ENCODE measurements at regions of chr13 and their contacts with region 1.

Region 1: DNA sequence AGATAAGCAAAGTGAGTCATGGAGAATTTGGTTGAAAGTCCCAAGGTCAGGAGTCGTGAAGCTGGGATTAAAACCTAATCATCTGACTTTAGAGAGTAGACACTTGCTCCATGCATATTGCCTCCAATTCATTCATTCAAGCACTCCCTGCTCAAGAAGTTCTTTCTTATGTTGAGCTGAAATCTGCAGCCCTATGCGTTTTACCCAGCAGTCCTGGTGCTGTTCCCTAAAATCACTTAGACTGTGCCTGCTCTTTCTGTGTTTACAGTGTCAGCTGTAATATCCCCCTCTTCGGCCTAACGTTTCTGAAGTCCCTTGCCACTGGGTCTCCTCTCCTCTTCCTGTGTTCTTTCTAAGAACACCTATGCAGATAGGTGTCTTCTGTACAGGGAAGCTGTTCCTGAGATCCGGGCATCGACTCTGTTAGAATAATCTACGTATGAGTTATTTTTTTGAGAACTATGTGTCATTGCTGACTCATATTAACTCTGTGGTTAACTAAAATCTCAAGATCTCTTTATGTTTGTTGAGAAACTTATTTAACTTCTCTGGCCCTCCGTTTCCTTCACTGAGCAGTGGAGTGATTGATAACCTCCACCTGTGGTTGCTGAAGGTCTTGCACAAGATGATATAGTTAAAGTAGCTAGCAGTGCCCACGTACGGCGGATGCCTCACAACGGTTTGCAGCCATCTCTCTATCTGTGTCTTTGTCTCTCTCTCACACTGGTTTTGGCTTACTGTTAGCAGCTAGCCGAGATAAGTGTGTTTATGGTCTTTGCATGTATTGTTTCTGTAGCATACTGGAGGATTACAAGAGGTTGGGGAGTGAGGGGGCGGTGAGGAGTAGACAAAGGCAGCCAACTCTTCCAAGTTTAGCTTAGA is 4.7 kb downstream of the ALOX5AP start:
- DNase-seq: peak in 8 of 9 donors; percentile 16 to 61 (median 32)
- ATAC-seq: peak; percentile 47
- H3K4me3 ChIP-seq: peak overlapping the region; percentile 29
- H3K4me3 Mint-ChIP-seq: peak overlapping the region; percentile 79 to 87 (median 82)
- H3K27ac ChIP-seq: no peak overlapping the region
- H3K27ac Mint-ChIP-seq: peak overlapping the region; percentile 7 to 93 (median 66)
- H3K4me1 ChIP-seq: peaks cover 59 to 60% of the 10 kb centered on the region in 2 donors
- H3K4me1 Mint-ChIP-seq: peaks cover 68 to 81% (median 79%) of the 10 kb centered on the region in 7 donors
- H3K27me3 ChIP-seq: no peaks in the 10 kb centered on the region
- H3K27me3 Mint-ChIP-seq: no peaks in the 10 kb centered on the region

Region 2: DNA sequence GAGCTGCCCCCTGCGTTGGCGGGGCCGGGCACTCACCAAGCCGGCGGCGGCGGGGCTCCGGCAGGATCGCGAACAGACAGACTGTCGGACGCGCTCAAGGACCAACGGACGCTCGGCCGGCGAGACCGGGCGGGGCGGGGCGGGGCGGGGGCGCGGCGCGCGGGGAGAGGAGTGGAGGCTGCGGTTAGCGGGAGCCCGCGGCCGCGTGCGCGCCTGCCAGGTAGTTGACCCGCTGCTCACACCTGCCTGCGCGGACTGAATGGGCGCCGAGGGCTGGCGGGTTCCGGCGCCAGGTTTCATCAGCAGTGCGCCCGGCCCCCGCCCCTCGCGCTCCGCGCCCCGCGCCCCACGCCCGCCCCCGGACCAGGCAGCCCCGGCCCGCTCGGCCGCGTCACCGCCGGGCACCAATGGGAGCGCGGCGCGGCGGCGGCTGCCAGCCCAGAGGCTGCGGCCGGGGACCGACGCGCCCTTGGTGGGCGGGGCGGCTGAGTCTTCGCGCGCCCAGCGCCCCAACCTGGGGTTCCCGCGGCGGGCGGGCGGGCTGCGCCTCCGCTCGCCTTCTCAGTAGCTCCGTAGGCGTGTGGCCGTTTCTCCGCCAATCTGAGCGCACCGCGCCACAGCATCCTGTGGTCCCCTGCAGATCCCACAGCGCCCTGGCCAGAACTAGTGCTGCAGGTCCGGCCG is 1144.5 kb before region 1 on chr13 and contains the start of gene SLC7A1:
- CTCF ChIA-PET with region 1: no interaction called
- POLR2A ChIA-PET with region 1: no interaction called
- intact Hi-C with region 1: loop called in 1 of 2 experiments (anchors 10 kb)
- DNase-seq: peak; percentile 74 to 93 (median 85)
- ATAC-seq: peak; percentile 95
- H3K4me3 ChIP-seq: peak within 1 kb of the TSS; percentile 73
- H3K4me3 Mint-ChIP-seq: peak within 1 kb of the TSS; percentile 88 to 94 (median 90)
- H3K27ac ChIP-seq: peak within 1 kb of the TSS; percentile 82
- H3K27ac Mint-ChIP-seq: peak within 1 kb of the TSS; percentile 74 to 96 (median 87)
- H3K4me1 ChIP-seq: peaks cover 6 to 7% of the 10 kb centered on the region in 2 donors
- H3K4me1 Mint-ChIP-seq: peaks cover 26 to 49% (median 43%) of the 10 kb centered on the region in 7 donors
- H3K27me3 ChIP-seq: no peaks in the 10 kb centered on the region
- H3K27me3 Mint-ChIP-seq: peaks cover 0 to 3% (median 2%) of the 10 kb centered on the region in 5 donors
- total RNA-seq, gene SLC7A1: 12.2 to 63.8 (median 28.2) TPM

Region 3: GRCh38 chr13:30520571-30520970 is 219.4 kb before region 1 on chr13:
- CTCF ChIA-PET with region 1: no interaction called
- POLR2A ChIA-PET with region 1: no interaction called
- intact Hi-C with region 1: no loop called
- DNase-seq: no peak
- ATAC-seq: no peak
- H3K4me3 ChIP-seq: no peak overlapping the region
- H3K4me3 Mint-ChIP-seq: no peak overlapping the region
- H3K27ac ChIP-seq: no peak overlapping the region
- H3K27ac Mint-ChIP-seq: no peak overlapping the region
- H3K4me1 ChIP-seq: peaks cover 0 to 1% of the 10 kb centered on the region in 2 donors
- H3K4me1 Mint-ChIP-seq: peaks cover 5 to 14% (median 9%) of the 10 kb centered on the region in 7 donors
- H3K27me3 ChIP-seq: no peaks in the 10 kb centered on the region
- H3K27me3 Mint-ChIP-seq: peaks cover 0 to 11% (median 0%) of the 10 kb centered on the region in 5 donors

Region 4: DNA sequence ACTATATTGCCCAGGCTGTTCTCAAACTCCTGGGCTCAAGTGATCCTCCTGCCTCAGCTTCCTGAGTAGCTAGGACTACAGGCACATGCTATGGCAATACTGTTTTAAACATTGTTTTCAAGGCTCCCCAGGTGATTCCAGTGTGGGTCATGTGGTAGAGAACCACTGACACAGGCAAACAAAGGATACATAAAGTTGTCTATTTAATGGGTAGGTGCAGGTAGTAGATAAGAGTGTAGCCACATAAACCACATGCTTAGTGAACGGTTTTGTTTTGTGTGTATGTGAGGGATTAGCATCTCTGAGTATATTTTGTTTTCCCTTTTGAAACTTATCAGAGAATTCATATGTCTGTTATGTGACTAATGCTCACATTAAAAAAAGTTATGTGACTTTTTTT is 85.6 kb before region 1 on chr13:
- CTCF ChIA-PET with region 1: no interaction called
- POLR2A ChIA-PET with region 1: no interaction called
- intact Hi-C with region 1: loop called in 1 of 2 experiments (anchors 1 kb)
- DNase-seq: no peak
- ATAC-seq: peak; percentile 76
- H3K4me3 ChIP-seq: no peak overlapping the region
- H3K4me3 Mint-ChIP-seq: peak overlapping the region in 2 of 10 donors; percentile 6 to 82
- H3K27ac ChIP-seq: no peak overlapping the region
- H3K27ac Mint-ChIP-seq: peak overlapping the region in 8 of 9 donors; percentile 17 to 93 (median 57)
- H3K4me1 ChIP-seq: peaks cover 0 to 8% of the 10 kb centered on the region in 2 donors
- H3K4me1 Mint-ChIP-seq: peaks cover 7 to 44% (median 37%) of the 10 kb centered on the region in 7 donors
- H3K27me3 ChIP-seq: no peaks in the 10 kb centered on the region
- H3K27me3 Mint-ChIP-seq: no peaks in the 10 kb centered on the region

Region 5: GRCh38 chr13:30673669-30674521 is 66.1 kb before region 1 on chr13:
- CTCF ChIA-PET with region 1: interaction called, 4 read pairs
- POLR2A ChIA-PET with region 1: interaction called, 3 read pairs
- intact Hi-C with region 1: loop called (anchors 1 kb)
- DNase-seq: peak; percentile 79 to 94 (median 86)
- ATAC-seq: peak; percentile 97
- H3K4me3 ChIP-seq: peak overlapping the region; percentile 67
- H3K4me3 Mint-ChIP-seq: peak overlapping the region; percentile 72 to 90 (median 88)
- H3K27ac ChIP-seq: peak overlapping the region; percentile 38
- H3K27ac Mint-ChIP-seq: peak overlapping the region; percentile 81 to 98 (median 91)
- H3K4me1 ChIP-seq: peaks cover 0 to 5% of the 10 kb centered on the region in 2 donors
- H3K4me1 Mint-ChIP-seq: peaks cover 2 to 32% (median 15%) of the 10 kb centered on the region in 7 donors
- H3K27me3 ChIP-seq: no peaks in the 10 kb centered on the region
- H3K27me3 Mint-ChIP-seq: peaks cover 0 to 36% (median 0%) of the 10 kb centered on the region in 5 donors

Region 6: DNA sequence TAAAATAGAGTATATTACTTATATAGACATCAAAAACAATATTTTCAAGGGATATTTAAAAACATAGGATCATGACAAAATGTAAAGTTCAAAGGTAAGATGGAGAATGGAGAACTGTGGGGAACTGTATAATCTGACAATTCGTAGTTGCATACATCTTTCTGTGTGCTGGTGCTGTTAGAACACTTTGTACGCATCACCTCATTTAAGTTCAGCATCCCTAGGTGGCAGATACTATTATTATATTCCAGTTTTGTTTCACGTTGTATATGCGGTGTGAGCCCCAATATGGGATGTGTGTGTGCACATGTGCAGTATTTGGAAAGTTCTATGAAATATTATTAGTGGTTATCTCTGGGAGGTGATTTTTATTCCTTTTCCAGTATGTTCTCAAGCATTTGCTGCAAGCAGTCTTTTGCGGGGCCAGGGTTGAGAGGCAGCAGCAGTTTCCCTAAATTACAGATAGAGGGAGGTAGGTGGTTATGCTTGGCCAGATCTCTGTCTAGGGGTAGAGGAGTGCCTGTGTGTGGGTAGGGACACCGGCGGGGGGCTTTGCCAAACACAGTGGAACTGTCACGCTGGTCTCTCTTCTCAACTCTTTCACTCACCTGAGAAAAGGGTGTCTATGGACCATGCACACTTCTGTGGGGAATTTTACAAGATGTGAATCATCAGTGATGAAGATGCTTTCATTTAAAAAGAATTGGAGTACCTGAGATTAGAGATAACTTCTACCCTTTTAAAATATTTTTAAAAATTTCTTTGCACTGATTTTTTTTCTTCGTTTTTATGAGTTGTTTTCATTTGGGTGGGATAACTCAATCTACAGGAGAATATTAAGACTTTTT is 60.3 kb before region 1 on chr13:
- CTCF ChIA-PET with region 1: no interaction called
- POLR2A ChIA-PET with region 1: no interaction called
- intact Hi-C with region 1: loop called (anchors 1 kb)
- DNase-seq: peak in 6 of 9 donors; percentile 19 to 49 (median 36)
- ATAC-seq: peak; percentile 90
- H3K4me3 ChIP-seq: no peak overlapping the region
- H3K4me3 Mint-ChIP-seq: peak overlapping the region in 1 of 10 donors; percentile 1
- H3K27ac ChIP-seq: no peak overlapping the region
- H3K27ac Mint-ChIP-seq: peak overlapping the region in 5 of 9 donors; percentile 34 to 76 (median 42)
- H3K4me1 ChIP-seq: no peaks in the 10 kb centered on the region
- H3K4me1 Mint-ChIP-seq: peaks cover 4 to 15% (median 10%) of the 10 kb centered on the region in 7 donors
- H3K27me3 ChIP-seq: no peaks in the 10 kb centered on the region
- H3K27me3 Mint-ChIP-seq: peaks cover 0 to 26% (median 0%) of the 10 kb centered on the region in 5 donors

Region 7: GRCh38 chr13:30702006-30702405 is 38.0 kb before region 1 on chr13:
- CTCF ChIA-PET with region 1: no interaction called
- POLR2A ChIA-PET with region 1: no interaction called
- intact Hi-C with region 1: loop called (anchors 5 kb)
- DNase-seq: no peak
- ATAC-seq: no peak
- H3K4me3 ChIP-seq: no peak overlapping the region
- H3K4me3 Mint-ChIP-seq: no peak overlapping the region
- H3K27ac ChIP-seq: no peak overlapping the region
- H3K27ac Mint-ChIP-seq: no peak overlapping the region
- H3K4me1 ChIP-seq: no peaks in the 10 kb centered on the region
- H3K4me1 Mint-ChIP-seq: peaks cover 0 to 21% (median 6%) of the 10 kb centered on the region in 7 donors
- H3K27me3 ChIP-seq: no peaks in the 10 kb centered on the region
- H3K27me3 Mint-ChIP-seq: peaks cover 0 to 25% (median 9%) of the 10 kb centered on the region in 5 donors

Region 8: GRCh38 chr13:30763786-30764413 is 23.9 kb after region 1 on chr13:
- CTCF ChIA-PET with region 1: no interaction called
- POLR2A ChIA-PET with region 1: no interaction called
- intact Hi-C with region 1: loop called in 1 of 2 experiments (anchors 1 kb)
- DNase-seq: no peak
- ATAC-seq: no peak
- H3K4me3 ChIP-seq: no peak overlapping the region
- H3K4me3 Mint-ChIP-seq: no peak overlapping the region
- H3K27ac ChIP-seq: no peak overlapping the region
- H3K27ac Mint-ChIP-seq: no peak overlapping the region
- H3K4me1 ChIP-seq: peaks cover 0 to 6% of the 10 kb centered on the region in 2 donors
- H3K4me1 Mint-ChIP-seq: peaks cover 0 to 23% (median 0%) of the 10 kb centered on the region in 7 donors
- H3K27me3 ChIP-seq: no peaks in the 10 kb centered on the region
- H3K27me3 Mint-ChIP-seq: no peaks in the 10 kb centered on the region